Posterior vena cava (tissue), 2 donors: ENCODE measurements at regions of chr17 and their contacts with region 1.

Region 1: DNA sequence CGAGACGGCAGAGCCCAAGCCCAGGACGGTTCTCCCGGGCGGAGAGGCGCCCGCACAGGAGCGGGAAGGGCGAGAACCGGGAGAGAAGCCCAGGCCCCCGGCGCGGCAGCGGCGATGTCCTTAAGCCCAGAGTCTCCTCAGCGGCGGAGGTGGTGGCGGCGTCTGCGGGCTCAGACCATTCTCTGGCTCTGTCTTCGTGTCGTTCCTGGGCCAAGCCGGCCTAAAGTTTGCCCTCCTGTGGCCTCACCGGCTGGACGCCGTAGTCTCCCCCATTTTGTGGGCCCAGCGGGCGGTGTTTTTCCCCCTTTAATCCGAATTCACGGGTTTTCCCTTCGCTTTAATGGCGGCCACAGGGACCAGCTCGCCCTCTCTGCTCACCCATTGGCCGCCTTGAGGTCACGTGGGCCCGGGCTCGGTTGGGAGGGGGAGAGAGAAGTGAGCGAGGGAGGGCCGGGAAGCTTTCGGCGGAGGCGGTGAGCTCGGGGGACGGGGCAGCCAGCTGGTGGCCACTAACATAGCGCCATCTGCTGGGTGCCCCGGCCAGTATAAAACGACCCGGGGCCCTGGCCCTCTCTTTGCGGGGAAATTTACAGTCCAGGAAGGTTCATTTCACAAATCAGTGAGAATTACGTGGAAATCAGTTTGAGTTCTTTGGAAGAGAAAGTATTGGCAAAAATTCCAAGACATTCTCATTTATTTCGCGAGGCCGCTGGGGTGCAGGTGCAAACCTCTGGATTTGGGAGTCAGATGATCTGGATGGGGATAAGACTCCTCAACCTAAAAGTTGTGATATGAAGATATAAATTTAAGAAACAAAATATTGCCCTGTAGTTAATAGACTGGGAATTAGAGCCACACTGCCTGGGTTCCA is 755 bp upstream of the MED13 start:
- DNase-seq: peak; percentile 100

Region 2: DNA sequence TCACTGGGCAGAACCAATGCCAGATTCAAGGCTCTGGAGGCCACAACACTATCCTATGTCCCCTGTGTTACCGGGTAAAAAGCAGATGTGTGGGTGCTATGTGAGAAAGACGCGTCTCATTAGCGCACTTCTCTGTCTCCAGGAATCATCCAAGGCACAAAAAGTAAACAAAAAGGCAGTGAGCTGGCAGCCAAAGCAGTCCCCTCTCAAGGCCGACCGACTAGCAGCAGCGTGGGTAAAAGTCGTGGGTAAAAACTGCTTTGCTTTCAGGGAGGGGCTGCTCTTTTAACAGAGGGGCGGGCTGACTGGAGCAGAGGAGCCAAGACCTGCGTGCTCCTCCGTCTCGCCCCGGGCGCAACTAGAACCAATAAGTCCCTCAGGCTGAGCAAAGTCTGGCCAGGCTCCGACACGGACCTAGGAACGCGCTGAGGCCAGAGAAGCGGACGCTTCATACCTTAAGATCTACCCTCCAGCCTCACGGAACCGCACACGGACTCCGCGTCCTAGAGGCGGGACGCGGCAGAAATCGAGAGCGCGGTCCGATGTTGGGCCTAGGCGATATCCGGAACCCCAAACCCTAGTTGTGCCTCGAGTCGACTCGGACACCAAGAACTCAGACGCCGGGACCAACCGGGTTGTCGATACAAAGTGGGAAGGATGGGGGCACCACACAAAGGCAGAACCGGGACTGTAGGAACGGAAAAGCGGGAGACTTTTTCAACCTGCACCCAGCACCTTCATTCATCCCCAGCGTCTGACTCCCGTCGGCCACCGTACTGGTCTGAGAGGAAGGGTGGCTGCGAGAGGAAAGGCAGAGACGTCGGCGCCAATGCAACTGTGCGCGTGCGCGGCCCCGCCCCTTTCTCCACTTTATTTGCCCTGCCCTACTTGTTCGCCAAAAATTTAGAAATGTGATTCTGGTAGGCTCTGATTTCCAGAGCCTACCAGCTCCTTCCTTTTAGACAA is 138.3 kb before region 1 on chr17 and contains the start of gene INTS2:
- intact Hi-C with region 1: loop called in 1 of 2 experiments (anchors 10 kb)
- DNase-seq: peak; percentile 99
- total RNA-seq, gene INTS2: 11.8 to 13.2 TPM

Region 3: GRCh38 chr17:62008294-62008693 is 57.5 kb before region 1 on chr17:
- intact Hi-C with region 1: no loop called
- DNase-seq: no peak